PC-9 (cell line): ENCODE measurements at regions of chr14 and their contacts with region 1.

Region 1: DNA sequence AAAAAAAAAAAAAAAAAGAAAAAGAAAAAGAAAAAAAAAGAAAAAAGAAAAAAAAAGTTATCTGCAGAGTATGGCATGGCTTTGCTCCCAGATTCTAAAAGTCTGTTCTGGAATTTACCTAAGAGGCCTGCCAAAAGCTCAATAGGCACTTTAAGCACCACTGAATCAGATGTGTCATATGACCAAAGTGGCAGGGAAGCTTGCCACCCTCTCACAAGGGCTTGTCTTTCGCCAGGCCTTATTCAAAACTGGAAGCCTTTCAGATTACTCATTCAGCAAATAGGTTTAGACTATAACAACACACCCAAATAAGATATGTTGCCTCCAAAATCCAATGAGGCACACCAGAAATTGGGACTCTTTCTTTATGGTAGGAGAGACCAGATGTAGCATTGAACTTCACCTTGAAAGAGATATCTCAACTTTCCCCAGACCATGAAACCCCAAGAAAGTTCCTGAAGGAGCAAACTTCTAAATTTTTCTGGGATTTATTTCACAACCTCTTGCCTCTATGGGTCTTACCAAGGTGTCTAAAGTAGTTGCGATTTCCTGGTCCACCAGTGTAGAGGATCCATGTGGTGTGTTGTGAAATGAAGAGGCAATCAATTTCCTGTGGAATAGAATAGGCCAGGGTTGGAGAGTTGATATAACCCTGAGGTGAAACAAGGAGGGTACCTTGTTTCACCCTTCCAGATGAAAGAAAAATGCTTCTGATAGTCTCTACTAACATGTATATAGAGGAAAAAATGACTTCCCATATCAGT is 218.8 kb downstream of the DAD1 start:
- DNase-seq: peak; percentile 44 to 70
- H3K4me3 ChIP-seq: no peak overlapping the region
- H3K27ac ChIP-seq: no peak overlapping the region
- H3K4me1 ChIP-seq: no peaks in the 10 kb centered on the region; the same call in 1 of the 2 replicates
- H3K27me3 ChIP-seq: no peaks in the 10 kb centered on the region
- CTCF ChIP-seq: no peak

Region 2: GRCh38 chr14:22039938-22040775 is 330.1 kb before region 1 on chr14:
- CTCF ChIA-PET with region 1: no interaction called
- POLR2A ChIA-PET with region 1: no interaction called
- intact Hi-C with region 1: no loop called
- DNase-seq: no peak
- H3K4me3 ChIP-seq: no peak overlapping the region
- H3K27ac ChIP-seq: no peak overlapping the region
- H3K4me1 ChIP-seq: no peaks in the 10 kb centered on the region
- H3K27me3 ChIP-seq: no peaks in the 10 kb centered on the region
- CTCF ChIP-seq: peak; percentile 59; the same call in 1 of the 2 replicates

Region 3: GRCh38 chr14:22276913-22277816 is 93.1 kb before region 1 on chr14:
- CTCF ChIA-PET with region 1: no interaction called
- POLR2A ChIA-PET with region 1: no interaction called
- intact Hi-C with region 1: loop called (anchors 5 kb)
- DNase-seq: no peak
- H3K4me3 ChIP-seq: no peak overlapping the region
- H3K27ac ChIP-seq: no peak overlapping the region
- H3K4me1 ChIP-seq: no peaks in the 10 kb centered on the region
- H3K27me3 ChIP-seq: no peaks in the 10 kb centered on the region
- CTCF ChIP-seq: peak; percentile 71